GM12878 (cell line): ENCODE measurements at regions of chr16 and their contacts with region 1.

Region 1: DNA sequence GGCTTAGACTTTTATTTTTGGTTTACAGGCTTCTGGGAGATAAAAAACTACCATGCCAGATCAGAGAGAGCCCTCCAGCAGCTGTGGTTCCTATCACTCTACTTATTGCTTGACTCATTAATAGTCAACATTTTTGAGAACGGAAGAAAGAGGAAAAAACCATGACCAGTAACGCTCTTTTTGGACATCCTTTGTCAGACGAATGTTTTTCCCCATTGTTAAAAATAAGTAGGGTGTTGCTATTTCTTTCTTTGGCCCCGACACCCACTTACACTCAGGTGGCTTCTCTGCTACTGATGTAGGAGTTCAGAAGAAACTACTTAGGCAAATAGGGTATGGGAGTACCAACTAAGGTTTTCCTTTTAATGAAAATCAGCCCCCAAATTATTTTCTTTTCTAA is 27.5 kb downstream of the TVP23A start:
- DNase-seq: peak; percentile 59
- ATAC-seq: peak; percentile 72
- H3K4me3 ChIP-seq: no peak overlapping the region
- H3K27ac ChIP-seq: peak overlapping the region; percentile 73
- H3K4me1 ChIP-seq: peaks cover 40% of the 10 kb centered on the region
- H3K27me3 ChIP-seq: no peaks in the 10 kb centered on the region
- CTCF ChIP-seq: no peak
- EP300 ChIP-seq: peak; percentile 39 to 70; a peak in 2 of 4 replicates
- POLR2A ChIP-seq: no peak
- RAD21 ChIP-seq: peak; percentile 25; the same call in 1 of the 2 replicates

Region 2: DNA sequence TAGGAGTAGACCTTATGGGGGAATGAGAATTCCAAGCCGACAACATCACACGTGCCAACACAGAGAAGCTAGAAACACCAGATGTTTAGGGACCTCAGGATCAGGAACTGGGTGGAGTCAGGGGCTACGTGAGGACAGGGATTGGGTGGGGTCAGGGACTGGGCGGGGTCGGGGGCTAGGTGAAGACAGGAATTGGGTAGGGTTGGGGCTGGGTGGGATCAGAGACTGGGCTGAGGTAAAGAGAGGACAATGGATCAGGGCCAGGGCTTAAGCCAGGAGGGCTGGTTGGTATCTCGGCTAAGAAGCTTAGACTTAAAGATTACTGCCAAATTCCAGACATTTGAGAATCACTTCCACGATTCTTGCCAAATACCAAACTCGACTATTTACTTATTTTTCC is 107.9 kb before region 1 on chr16:
- CTCF ChIA-PET with region 1: no interaction called
- POLR2A ChIA-PET with region 1: no interaction called
- RAD21 ChIA-PET with region 1: no interaction called
- SMC1A ChIA-PET with region 1: no interaction called
- in situ Hi-C with region 1: no loop called
- intact Hi-C with region 1: no loop called
- DNase-seq: no peak
- ATAC-seq: no peak
- H3K4me3 ChIP-seq: no peak overlapping the region
- H3K27ac ChIP-seq: no peak overlapping the region
- H3K4me1 ChIP-seq: no peaks in the 10 kb centered on the region
- H3K27me3 ChIP-seq: peaks cover 0 to 5% of the 10 kb centered on the region in 2 experiments; a peak in 3 of 4 replicates
- CTCF ChIP-seq: no peak
- EP300 ChIP-seq: no peak
- POLR2A ChIP-seq: no peak
- RAD21 ChIP-seq: no peak

Region 3: GRCh38 chr16:10806698-10807097 is 15.7 kb after region 1 on chr16:
- CTCF ChIA-PET with region 1: interaction called, 6 read pairs
- POLR2A ChIA-PET with region 1: interaction called, 7 read pairs
- RAD21 ChIA-PET with region 1: interaction called, 9 read pairs
- SMC1A ChIA-PET with region 1: interaction called, 16 read pairs
- in situ Hi-C with region 1: no loop called
- intact Hi-C with region 1: no loop called
- DNase-seq: no peak
- ATAC-seq: peak; percentile 37
- H3K4me3 ChIP-seq: no peak overlapping the region
- H3K27ac ChIP-seq: 0 out of 2 replicates have a peak overlapping the region, but pooled peaks have one; percentile 2
- H3K4me1 ChIP-seq: peaks cover 59% of the 10 kb centered on the region
- H3K27me3 ChIP-seq: no peaks in the 10 kb centered on the region
- CTCF ChIP-seq: no peak
- EP300 ChIP-seq: no peak
- POLR2A ChIP-seq: no peak
- RAD21 ChIP-seq: no peak

Region 4: DNA sequence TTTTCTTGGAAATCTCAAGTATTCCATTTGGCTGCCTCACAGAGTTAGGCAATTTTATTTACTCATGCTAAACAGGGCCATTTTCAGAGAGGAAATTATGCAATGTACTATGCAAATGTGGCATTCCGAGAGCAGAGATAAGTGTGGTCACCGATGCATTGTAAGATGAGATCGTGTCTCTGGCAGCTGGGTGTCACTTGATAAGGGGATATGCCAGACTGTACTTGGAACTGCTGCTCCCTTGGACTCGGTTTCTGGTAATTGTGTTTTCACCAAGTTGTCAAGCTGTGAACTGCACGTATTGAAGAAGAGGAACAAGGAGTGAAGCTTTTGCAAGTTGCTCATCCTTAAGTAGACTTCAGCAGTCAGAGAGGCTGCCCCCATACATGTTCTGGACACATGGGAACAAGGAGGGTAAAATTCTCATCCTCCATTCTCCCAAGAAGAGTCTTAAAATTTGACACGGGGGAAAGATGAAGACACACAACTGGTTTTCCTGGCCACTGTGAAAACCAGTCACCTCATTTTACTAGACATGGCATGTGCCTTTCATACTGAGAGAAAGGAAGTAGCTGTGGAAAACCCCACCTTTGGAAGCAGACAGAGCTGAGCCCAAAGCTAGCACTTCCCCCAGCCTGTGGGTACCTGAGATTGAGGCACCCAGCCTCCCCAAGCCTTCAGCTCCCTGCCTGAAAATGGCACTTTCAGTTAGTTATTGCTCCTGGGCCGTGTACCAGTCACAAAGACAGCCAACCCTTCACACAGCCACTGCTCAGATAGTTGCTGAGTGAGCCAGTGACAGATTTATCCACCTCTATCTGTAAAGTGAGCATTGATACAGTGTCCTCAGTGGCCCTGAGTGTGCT is 314.2 kb after region 1 on chr16:
- CTCF ChIA-PET with region 1: no interaction called
- POLR2A ChIA-PET with region 1: no interaction called
- RAD21 ChIA-PET with region 1: no interaction called
- SMC1A ChIA-PET with region 1: no interaction called
- in situ Hi-C with region 1: no loop called
- intact Hi-C with region 1: no loop called
- DNase-seq: peak; percentile 86
- ATAC-seq: peak; percentile 85
- H3K4me3 ChIP-seq: 0 out of 2 replicates have a peak overlapping the region, but pooled peaks have one; percentile 31
- H3K27ac ChIP-seq: peak overlapping the region; percentile 87
- H3K4me1 ChIP-seq: peaks cover 38% of the 10 kb centered on the region
- H3K27me3 ChIP-seq: no peaks in the 10 kb centered on the region
- CTCF ChIP-seq: no peak
- EP300 ChIP-seq: peak in 1 of 2 experiments; percentile 46; a peak in 1 of 4 replicates
- POLR2A ChIP-seq: peak; percentile 69
- RAD21 ChIP-seq: no peak